Ascending aorta (tissue), 2 donors: ENCODE measurements at regions of chr19 and their contacts with region 1.

Region 1: DNA sequence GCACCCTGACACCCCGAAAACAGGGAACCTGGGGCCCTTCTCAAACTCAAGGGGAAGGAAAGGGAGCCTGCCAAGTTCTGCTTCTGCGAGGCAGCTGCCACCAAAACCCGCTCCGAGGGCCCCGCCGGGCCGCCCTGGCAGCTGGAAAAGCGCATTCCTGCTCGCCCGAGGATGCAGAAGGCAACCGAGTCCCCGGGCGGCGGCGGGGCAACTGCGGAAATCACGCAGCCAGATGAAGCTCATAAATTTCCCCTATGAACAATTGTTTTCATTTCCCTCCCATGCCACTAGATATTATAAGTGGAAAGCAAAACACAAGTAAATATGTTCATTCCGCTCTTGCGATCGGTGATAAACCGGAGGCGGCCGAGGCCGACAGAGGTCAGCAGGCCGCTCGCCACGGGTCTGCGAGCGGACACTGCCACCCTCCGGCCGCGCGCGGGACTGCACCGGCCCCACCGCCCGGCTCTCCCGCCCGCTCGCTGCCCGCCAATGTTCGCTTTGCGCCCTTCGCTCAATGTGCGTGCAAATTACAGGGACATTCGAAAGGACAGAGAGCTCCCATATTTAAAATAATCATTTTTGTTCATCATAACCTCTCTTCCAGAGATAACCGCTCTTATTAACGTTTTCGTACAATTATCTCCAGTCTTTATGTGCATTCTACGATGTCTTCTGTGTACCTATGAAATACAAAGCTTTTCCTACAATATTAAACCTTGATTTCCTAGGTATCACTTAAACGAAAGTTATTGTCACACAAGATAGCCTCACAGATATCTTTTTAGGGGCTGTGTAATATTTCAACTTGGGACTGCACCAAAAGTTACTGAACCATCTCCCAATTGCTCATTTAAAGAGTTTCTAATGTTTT is 120.8 kb upstream of the ZNF507 start:
- DNase-seq: no peak
- H3K4me3 ChIP-seq: peak overlapping the region in 1 of 2 donors; percentile 36
- H3K27ac ChIP-seq: no peak overlapping the region
- H3K4me1 ChIP-seq: peaks cover 0 to 2% of the 10 kb centered on the region in 2 donors
- H3K27me3 ChIP-seq: no peaks in the 10 kb centered on the region
- CTCF ChIP-seq: peak; percentile 74 to 97 (median 97)

Region 2: GRCh38 chr19:30666301-30666803 is 1558.3 kb before region 1 on chr19:
- intact Hi-C with region 1: loop called (anchors 2 kb)
- DNase-seq: peak in 1 of 2 donors; percentile 61
- H3K4me3 ChIP-seq: no peak overlapping the region
- H3K27ac ChIP-seq: no peak overlapping the region
- H3K4me1 ChIP-seq: no peaks in the 10 kb centered on the region
- H3K27me3 ChIP-seq: no peaks in the 10 kb centered on the region
- CTCF ChIP-seq: peak; percentile 44 to 89 (median 83)

Region 3: GRCh38 chr19:30684613-30685012 is 1540.0 kb before region 1 on chr19:
- intact Hi-C with region 1: loop called (anchors 2 kb)
- DNase-seq: no peak
- H3K4me3 ChIP-seq: no peak overlapping the region
- H3K27ac ChIP-seq: no peak overlapping the region
- H3K4me1 ChIP-seq: no peaks in the 10 kb centered on the region
- H3K27me3 ChIP-seq: no peaks in the 10 kb centered on the region
- CTCF ChIP-seq: no peak